Endothelial cell of umbilical vein (primary cell): ENCODE measurements at regions of chr17 and their contacts with region 1.

Region 1: GRCh38 chr17:76868176-76868668 is at the start of gene MGAT5B:
- DNase-seq: peak; percentile 66
- H3K4me3 ChIP-seq: no peak within 1 kb of the TSS
- H3K27ac ChIP-seq: peak within 1 kb of the TSS; percentile 10
- H3K4me1 ChIP-seq: peaks cover 32% of the 10 kb centered on the region
- H3K27me3 ChIP-seq: peaks cover 0 to 12% of the 10 kb centered on the region in 2 experiments
- CTCF ChIP-seq: peak; percentile 72 to 92
- POLR2A ChIP-seq: no peak
- total RNA-seq, gene MGAT5B: 2.1 and 2.3 TPM in 2 replicates

Region 2: DNA sequence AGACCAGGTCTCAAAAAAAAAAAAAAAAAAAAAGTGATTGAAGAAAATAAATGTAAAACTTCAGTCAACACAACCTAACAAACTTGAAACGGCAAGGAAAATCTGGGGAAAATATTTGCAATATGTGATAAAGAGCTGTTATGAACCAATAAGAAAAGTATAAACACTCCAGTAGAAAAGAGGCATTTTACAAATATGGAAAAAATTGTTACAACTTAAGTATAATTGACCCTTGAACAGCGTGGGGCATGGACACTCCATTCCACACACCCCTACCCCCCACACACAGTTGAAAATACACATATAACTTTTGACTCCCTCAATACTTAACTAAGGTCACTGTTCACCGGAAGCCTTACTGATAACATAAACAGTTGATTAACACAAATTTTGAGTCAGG is 109.7 kb before region 1 on chr17:
- CTCF ChIA-PET with region 1: no interaction called
- POLR2A ChIA-PET with region 1: no interaction called
- dilution Hi-C with region 1: no loop called
- intact Hi-C with region 1: no loop called
- DNase-seq: no peak
- H3K4me3 ChIP-seq: no peak overlapping the region
- H3K27ac ChIP-seq: no peak overlapping the region
- H3K4me1 ChIP-seq: no peaks in the 10 kb centered on the region
- H3K27me3 ChIP-seq: no peaks in the 10 kb centered on the region
- CTCF ChIP-seq: no peak
- POLR2A ChIP-seq: no peak

Region 3: GRCh38 chr17:76791053-76791980 is 76.9 kb before region 1 on chr17:
- CTCF ChIA-PET with region 1: no interaction called
- POLR2A ChIA-PET with region 1: no interaction called
- dilution Hi-C with region 1: no loop called
- intact Hi-C with region 1: loop called (anchors 5 kb)
- DNase-seq: peak; percentile 53
- H3K4me3 ChIP-seq: no peak overlapping the region
- H3K27ac ChIP-seq: no peak overlapping the region
- H3K4me1 ChIP-seq: peaks cover 7% of the 10 kb centered on the region
- H3K27me3 ChIP-seq: no peaks in the 10 kb centered on the region
- CTCF ChIP-seq: no peak
- POLR2A ChIP-seq: no peak

Region 4: DNA sequence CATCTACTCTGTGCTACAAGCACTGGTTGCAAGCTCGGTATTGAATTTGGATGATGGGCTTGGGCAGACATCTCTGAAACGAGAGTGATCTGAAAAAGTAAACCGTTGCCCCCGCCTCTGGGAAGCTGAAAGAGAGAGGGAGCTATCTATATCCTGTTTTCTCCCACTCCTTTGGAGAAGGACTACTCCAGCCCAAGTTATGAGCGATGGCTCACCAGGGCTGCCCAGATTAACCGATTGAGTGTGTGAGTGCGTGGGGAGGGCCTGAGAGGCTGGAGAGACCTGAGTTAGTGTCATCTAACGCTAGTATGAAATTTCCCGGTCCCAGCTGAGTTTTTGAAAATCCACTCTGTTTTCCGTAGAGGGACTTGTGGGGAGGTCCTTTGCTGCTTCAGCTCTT is 11.5 kb after region 1 on chr17:
- CTCF ChIA-PET with region 1: interaction called, 24 read pairs
- POLR2A ChIA-PET with region 1: no interaction called
- dilution Hi-C with region 1: no loop called
- intact Hi-C with region 1: no loop called
- DNase-seq: no peak
- H3K4me3 ChIP-seq: no peak overlapping the region
- H3K27ac ChIP-seq: no peak overlapping the region
- H3K4me1 ChIP-seq: no peaks in the 10 kb centered on the region
- H3K27me3 ChIP-seq: no peaks in the 10 kb centered on the region
- CTCF ChIP-seq: no peak
- POLR2A ChIP-seq: no peak

Region 5: DNA sequence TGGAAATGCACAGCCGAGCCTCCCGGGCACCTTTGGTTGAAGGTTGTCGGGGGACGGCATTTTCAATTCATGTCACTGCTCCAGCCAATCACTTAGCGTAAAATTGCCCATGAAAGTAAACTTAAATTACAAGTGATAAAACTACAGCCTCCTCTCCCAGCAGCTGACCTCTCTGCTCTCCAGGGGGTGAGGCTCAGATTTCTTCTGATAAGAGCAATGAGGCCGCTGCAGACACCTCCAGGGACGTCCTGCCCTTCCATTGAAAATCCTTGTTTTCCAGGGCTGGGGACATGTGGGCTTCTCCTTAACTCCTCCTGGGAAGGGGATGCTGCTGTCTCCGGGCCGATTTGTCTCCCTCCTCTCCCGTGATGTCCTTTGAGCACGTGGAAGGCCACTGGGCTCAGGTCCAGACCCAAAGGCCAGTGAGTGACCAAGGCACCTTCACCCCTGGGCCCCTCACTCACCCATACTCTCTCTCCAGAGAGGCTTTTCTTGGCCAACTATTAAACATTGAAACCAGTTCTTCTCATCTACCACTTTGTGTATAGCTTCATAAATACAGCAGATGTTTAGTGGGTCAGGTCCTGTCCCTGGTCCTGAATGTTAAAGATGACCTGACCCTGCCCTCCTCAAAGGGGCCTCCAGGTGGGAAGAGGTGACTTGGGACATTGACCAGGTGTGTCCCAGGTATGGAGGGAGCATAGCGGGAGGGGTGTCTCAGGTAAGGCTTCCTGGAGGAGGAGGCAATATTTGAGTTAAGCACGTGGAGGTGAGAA is 52.3 kb after region 1 on chr17:
- CTCF ChIA-PET with region 1: no interaction called
- POLR2A ChIA-PET with region 1: no interaction called
- dilution Hi-C with region 1: no loop called
- intact Hi-C with region 1: no loop called
- DNase-seq: no peak
- H3K4me3 ChIP-seq: no peak overlapping the region
- H3K27ac ChIP-seq: no peak overlapping the region
- H3K4me1 ChIP-seq: no peaks in the 10 kb centered on the region
- H3K27me3 ChIP-seq: no peaks in the 10 kb centered on the region
- CTCF ChIP-seq: no peak
- POLR2A ChIP-seq: no peak

Region 6: DNA sequence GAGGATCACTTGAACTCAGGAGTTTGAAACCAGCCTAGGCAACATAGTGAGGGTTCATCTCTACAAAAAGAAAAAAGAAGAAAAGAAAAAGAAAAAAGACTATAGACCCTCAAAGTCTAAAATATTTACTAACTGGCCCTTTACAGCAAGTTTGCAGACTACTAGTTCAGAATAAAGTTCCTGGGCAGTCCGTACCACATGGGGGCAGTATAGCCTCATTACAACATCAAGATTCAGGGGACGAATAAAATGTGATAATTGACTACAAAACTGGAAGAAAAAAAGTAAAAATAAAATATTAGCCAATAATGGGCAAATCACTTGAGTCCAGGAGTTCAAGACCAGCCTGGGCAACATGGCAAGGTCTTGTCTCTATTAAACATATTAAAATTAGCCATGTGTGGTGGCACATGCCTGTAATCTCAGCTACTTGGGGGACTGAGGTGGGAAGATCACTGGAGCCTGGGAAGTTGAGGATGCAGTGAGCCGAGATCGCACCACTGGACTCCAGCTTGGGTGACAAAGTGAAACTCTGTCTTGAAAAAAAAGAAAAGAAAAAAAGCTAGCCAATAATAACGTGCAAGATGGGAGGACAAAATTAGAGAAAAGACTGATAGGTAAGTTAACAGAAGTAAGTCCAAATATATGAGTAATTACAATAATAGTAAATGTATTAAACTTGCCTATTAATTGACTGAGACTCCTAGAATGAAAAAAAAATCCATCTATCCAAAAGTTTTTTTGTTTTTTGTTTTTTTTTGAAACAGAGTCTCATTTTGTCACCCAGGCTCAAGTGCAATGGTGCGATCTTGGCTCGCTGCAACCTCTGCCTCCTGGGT is 143.2 kb after region 1 on chr17:
- CTCF ChIA-PET with region 1: interaction called, 10 read pairs
- POLR2A ChIA-PET with region 1: no interaction called
- dilution Hi-C with region 1: no loop called
- intact Hi-C with region 1: loop called (anchors 1 kb)
- DNase-seq: peak; percentile 53
- H3K4me3 ChIP-seq: no peak overlapping the region
- H3K27ac ChIP-seq: no peak overlapping the region
- H3K4me1 ChIP-seq: no peaks in the 10 kb centered on the region
- H3K27me3 ChIP-seq: peaks cover 3 to 6% of the 10 kb centered on the region in 2 experiments
- CTCF ChIP-seq: peak; percentile 50 to 56
- POLR2A ChIP-seq: no peak

Region 7: GRCh38 chr17:77036807-77037381 is 168.7 kb after region 1 on chr17:
- CTCF ChIA-PET with region 1: no interaction called
- POLR2A ChIA-PET with region 1: no interaction called
- dilution Hi-C with region 1: no loop called
- intact Hi-C with region 1: no loop called
- DNase-seq: no peak
- H3K4me3 ChIP-seq: no peak overlapping the region
- H3K27ac ChIP-seq: no peak overlapping the region
- H3K4me1 ChIP-seq: no peaks in the 10 kb centered on the region
- H3K27me3 ChIP-seq: no peaks in the 10 kb centered on the region
- CTCF ChIP-seq: no peak
- POLR2A ChIP-seq: no peak

Region 8: DNA sequence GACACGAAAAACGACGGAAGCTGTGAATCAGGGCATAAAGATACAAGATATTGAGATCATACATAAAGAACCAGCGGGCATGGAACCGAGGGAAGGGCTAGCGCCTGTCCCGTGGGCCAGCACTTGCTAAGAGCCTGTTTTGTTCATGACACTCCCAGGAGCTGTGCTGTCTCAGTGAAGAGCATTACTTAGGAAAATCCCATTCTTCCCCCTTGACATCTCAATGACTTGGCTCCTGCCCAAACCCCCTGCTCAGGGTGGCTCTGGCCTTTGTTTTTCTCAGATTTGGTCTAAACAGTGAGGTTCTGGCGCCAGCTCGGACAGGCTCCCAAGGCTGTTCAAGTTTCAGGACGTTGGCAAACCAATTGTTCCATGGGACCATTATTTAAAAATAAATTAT is 193.4 kb after region 1 on chr17:
- CTCF ChIA-PET with region 1: interaction called, 334 read pairs
- POLR2A ChIA-PET with region 1: no interaction called
- dilution Hi-C with region 1: no loop called
- intact Hi-C with region 1: loop called (anchors 1 kb)
- DNase-seq: no peak
- H3K4me3 ChIP-seq: no peak overlapping the region
- H3K27ac ChIP-seq: no peak overlapping the region
- H3K4me1 ChIP-seq: no peaks in the 10 kb centered on the region
- H3K27me3 ChIP-seq: peaks cover 3 to 8% of the 10 kb centered on the region in 2 experiments
- CTCF ChIP-seq: no peak
- POLR2A ChIP-seq: no peak

Region 9: GRCh38 chr17:77247048-77247541 is 378.9 kb after region 1 on chr17:
- CTCF ChIA-PET with region 1: no interaction called
- POLR2A ChIA-PET with region 1: no interaction called
- dilution Hi-C with region 1: no loop called
- intact Hi-C with region 1: loop called (anchors 5 kb)
- DNase-seq: peak; percentile 63
- H3K4me3 ChIP-seq: peak overlapping the region in 2 of 3 experiments; percentile 16 to 62
- H3K27ac ChIP-seq: no peak overlapping the region
- H3K4me1 ChIP-seq: peaks cover 9% of the 10 kb centered on the region
- H3K27me3 ChIP-seq: no peaks in the 10 kb centered on the region
- CTCF ChIP-seq: peak; percentile 87 to 94
- POLR2A ChIP-seq: no peak